Activated CD8-positive, alpha-beta T cell treated with anti-CD3 and anti-CD28 coated beads for 36 hours (primary cell): ENCODE measurements at regions of chr9 and their contacts with region 1.

Region 1: GRCh38 chr9:26112724-26113123 is 434.5 kb upstream of the TUSC1 start:
- DNase-seq: no peak
- ATAC-seq: no peak
- H3K4me3 Mint-ChIP-seq: no peak overlapping the region
- H3K27ac Mint-ChIP-seq: no peak overlapping the region
- H3K4me1 Mint-ChIP-seq: no peaks in the 10 kb centered on the region
- H3K27me3 Mint-ChIP-seq: no peaks in the 10 kb centered on the region
- CTCF ChIP-seq: no peak

Region 2: GRCh38 chr9:26054600-26055520 is 57.9 kb before region 1 on chr9:
- CTCF ChIA-PET with region 1: no interaction called
- POLR2A ChIA-PET with region 1: no interaction called
- intact Hi-C with region 1: loop called (anchors 5 kb)
- DNase-seq: no peak
- ATAC-seq: no peak
- H3K4me3 Mint-ChIP-seq: no peak overlapping the region
- H3K27ac Mint-ChIP-seq: no peak overlapping the region
- H3K4me1 Mint-ChIP-seq: no peaks in the 10 kb centered on the region
- H3K27me3 Mint-ChIP-seq: no peaks in the 10 kb centered on the region
- CTCF ChIP-seq: no peak